ENCODE measurements at regions of chr1 and their contacts with region 1.

Region 1: DNA sequence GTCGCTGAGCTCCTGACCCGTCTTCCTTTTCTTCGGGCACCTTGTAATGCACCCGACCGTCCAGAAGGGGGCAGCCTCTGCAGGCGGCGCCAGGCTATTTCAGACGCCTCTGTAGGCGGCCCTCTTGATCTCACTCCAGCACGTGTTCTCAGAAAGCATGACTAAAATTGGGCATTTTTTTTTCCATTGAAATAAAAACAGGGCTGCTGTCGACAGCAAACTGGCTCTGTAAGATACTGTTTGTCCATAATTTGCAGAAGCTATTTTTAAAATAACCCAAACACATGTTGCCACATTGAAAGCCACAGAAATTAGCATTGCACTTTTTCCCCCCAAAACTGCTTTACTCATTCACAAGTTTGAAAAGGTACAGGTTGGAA is 78.0 kb downstream of the STUM start:
- DNase-seq: peak; percentile 84
- ATAC-seq: peak; percentile 92
- H3K4me3 Mint-ChIP-seq: no peak overlapping the region
- H3K27ac Mint-ChIP-seq: no peak overlapping the region
- H3K4me1 Mint-ChIP-seq: no peaks in the 10 kb centered on the region
- H3K27me3 Mint-ChIP-seq: peaks cover 35% of the 10 kb centered on the region
- CTCF ChIP-seq: peak; percentile 98

Region 2: GRCh38 chr1:226547754-226548191 is 78.8 kb before region 1 on chr1:
- CTCF ChIA-PET with region 1: interaction called, 28 read pairs
- POLR2A ChIA-PET with region 1: no interaction called
- DNase-seq: peak; percentile 86
- ATAC-seq: peak; percentile 79
- H3K4me3 Mint-ChIP-seq: peak overlapping the region; percentile 50
- H3K27ac Mint-ChIP-seq: no peak overlapping the region
- H3K4me1 Mint-ChIP-seq: peaks cover 23% of the 10 kb centered on the region
- H3K27me3 Mint-ChIP-seq: peaks cover 70% of the 10 kb centered on the region
- CTCF ChIP-seq: peak; percentile 58

Region 3: DNA sequence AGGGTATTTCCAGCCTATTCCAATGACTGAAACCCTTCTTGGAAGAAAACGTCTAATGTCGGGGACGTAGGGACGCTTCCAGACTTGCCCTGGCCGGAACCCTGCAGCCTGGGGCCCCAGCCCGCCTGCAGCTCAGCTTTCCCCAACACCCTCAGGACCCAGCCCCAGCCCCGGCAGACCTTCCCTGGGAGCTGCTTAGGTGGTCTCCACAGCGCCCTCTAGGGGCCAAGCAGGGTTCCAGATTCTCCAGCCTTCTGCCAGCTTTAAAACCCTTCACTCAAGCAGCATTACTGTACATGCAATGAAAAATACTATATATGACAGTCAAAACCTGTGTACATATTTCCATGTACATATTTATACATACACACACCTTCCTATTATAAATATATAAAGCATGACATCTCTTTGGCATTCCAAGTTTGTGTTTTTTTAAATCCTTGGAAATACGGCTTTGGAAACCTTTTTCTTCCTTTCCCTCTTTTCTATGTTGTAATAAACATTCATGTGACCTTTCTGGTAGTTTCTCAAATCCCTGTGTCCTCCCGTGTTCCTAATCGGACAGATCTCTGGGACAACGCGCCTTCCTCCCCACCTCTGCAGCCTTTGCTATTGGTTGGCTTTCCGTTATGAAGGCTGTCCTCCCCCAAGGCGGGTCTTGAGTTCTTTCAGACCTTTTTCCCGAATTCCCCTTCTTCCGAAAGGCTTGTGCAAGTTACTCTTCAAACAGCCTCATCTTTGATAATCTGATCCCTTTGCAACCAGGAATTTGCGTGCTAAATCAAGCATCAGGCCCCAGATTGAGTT is 17.7 kb before region 1 on chr1:
- CTCF ChIA-PET with region 1: interaction called, 45 read pairs
- POLR2A ChIA-PET with region 1: no interaction called
- DNase-seq: peak; percentile 86
- ATAC-seq: peak; percentile 66
- H3K4me3 Mint-ChIP-seq: no peak overlapping the region; the same call in 1 of the 2 replicates
- H3K27ac Mint-ChIP-seq: no peak overlapping the region
- H3K4me1 Mint-ChIP-seq: peaks cover 43% of the 10 kb centered on the region
- H3K27me3 Mint-ChIP-seq: no peaks in the 10 kb centered on the region; the same call in none of the 2 replicates
- CTCF ChIP-seq: peak; percentile 93

Region 4: GRCh38 chr1:226649780-226650179 is 23.2 kb after region 1 on chr1:
- CTCF ChIA-PET with region 1: interaction called, 12 read pairs
- POLR2A ChIA-PET with region 1: no interaction called
- DNase-seq: peak; percentile 40
- ATAC-seq: peak; percentile 15
- H3K4me3 Mint-ChIP-seq: no peak overlapping the region
- H3K27ac Mint-ChIP-seq: no peak overlapping the region
- H3K4me1 Mint-ChIP-seq: peaks cover 34% of the 10 kb centered on the region
- H3K27me3 Mint-ChIP-seq: no peaks in the 10 kb centered on the region
- CTCF ChIP-seq: no peak

Region 5: GRCh38 chr1:226668173-226668560 is 41.6 kb after region 1 on chr1:
- CTCF ChIA-PET with region 1: interaction called, 11 read pairs
- POLR2A ChIA-PET with region 1: no interaction called
- DNase-seq: no peak
- ATAC-seq: peak; percentile 33; the same call in 1 of the 2 replicates
- H3K4me3 Mint-ChIP-seq: no peak overlapping the region
- H3K27ac Mint-ChIP-seq: no peak overlapping the region; the same call in 1 of the 2 replicates
- H3K4me1 Mint-ChIP-seq: peaks cover 40% of the 10 kb centered on the region
- H3K27me3 Mint-ChIP-seq: no peaks in the 10 kb centered on the region
- CTCF ChIP-seq: no peak

Region 6: GRCh38 chr1:226827968-226828513 is 201.5 kb after region 1 on chr1:
- CTCF ChIA-PET with region 1: interaction called, 40 read pairs
- POLR2A ChIA-PET with region 1: no interaction called
- DNase-seq: peak; percentile 98
- ATAC-seq: peak; percentile 94
- H3K4me3 Mint-ChIP-seq: no peak overlapping the region
- H3K27ac Mint-ChIP-seq: no peak overlapping the region
- H3K4me1 Mint-ChIP-seq: peaks cover 13% of the 10 kb centered on the region
- H3K27me3 Mint-ChIP-seq: peaks cover 2% of the 10 kb centered on the region; the same call in 1 of the 2 replicates
- CTCF ChIP-seq: peak; percentile 89

Region 7: DNA sequence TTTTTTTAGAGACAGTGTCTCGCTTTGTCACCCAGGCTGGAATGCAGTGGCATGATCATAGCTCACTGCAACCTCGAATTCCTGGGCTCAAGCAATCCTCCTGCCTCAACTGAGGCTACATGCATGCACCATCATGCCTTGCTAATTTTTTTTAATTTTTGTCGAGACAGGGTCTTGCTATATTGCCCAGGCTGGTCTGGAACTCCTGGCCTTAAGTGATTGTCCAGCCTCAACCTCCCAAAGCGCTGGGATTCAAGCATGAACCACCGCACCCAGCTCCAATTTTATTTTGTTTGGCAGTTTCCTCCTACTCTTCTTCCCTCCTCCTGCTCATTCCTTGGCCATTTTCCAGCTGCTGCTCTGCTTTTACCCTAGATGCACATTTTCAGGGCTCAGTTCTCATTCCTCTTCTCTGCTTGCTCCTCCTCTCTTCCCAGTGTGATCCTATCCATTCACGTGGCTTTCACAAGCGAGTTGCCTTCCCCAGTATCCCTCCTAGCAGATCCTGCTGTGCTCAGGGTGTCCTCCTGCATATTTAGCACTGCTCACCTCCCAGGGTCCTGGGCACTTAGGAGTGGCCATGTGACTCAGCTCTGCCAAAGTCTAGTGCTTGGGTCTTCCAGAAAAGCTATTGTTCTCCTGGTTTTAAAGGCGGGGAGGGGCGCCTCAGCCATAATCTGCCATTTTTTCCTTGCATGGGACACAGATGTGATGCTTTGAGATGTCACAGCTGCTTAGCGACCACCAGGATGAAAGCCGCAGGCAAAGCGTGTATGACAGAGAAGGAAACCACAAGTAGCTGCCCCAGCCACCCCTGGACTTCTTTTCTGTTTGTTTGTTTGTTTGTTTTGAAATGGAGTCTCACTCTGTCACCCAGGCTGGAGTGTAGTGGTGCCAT is 277.5 kb after region 1 on chr1:
- CTCF ChIA-PET with region 1: no interaction called
- POLR2A ChIA-PET with region 1: no interaction called
- DNase-seq: no peak
- ATAC-seq: no peak
- H3K4me3 Mint-ChIP-seq: no peak overlapping the region
- H3K27ac Mint-ChIP-seq: peak overlapping the region; percentile 25; the same call in 1 of the 2 replicates
- H3K4me1 Mint-ChIP-seq: peaks cover 8% of the 10 kb centered on the region
- H3K27me3 Mint-ChIP-seq: no peaks in the 10 kb centered on the region
- CTCF ChIP-seq: no peak

Measured in WTC11 (cell line).